ENCODE measurements at regions of chr2 and their contacts with region 1.

Region 1: GRCh38 chr2:112529757-112530156 is 12.5 kb upstream of the POLR1B start:
- DNase-seq: no peak
- H3K4me3 ChIP-seq: no peak overlapping the region
- H3K27ac ChIP-seq: no peak overlapping the region
- H3K4me1 ChIP-seq: no peaks in the 10 kb centered on the region
- H3K27me3 ChIP-seq: no peaks in the 10 kb centered on the region
- CTCF ChIP-seq: no peak

Region 2: DNA sequence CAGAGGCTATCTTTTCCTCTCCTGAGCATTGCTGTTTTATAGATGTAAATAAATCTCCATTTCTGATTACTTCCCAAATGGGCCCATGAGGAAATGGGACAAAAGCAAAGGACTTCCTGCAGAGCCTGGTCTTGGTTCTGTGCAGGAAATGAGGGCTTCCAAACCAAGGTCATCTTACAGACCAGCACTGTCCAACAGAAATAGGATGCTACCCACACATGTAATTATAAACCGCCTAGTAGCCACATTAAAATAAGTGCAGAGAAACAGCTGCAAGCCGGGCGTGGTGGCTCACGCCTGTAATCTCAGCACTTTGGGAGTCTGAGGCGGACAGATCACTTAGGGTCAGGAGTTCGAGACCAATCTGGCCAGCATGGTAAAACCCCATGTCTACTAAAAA is 41.6 kb before region 1 on chr2:
- CTCF ChIA-PET with region 1: no interaction called
- dilution Hi-C with region 1: loop called (anchors 5 kb)
- in situ Hi-C with region 1: no loop called
- intact Hi-C with region 1: no loop called
- DNase-seq: no peak
- H3K4me3 ChIP-seq: no peak overlapping the region
- H3K27ac ChIP-seq: no peak overlapping the region
- H3K4me1 ChIP-seq: peaks cover 5% of the 10 kb centered on the region
- H3K27me3 ChIP-seq: no peaks in the 10 kb centered on the region
- CTCF ChIP-seq: no peak

Region 3: GRCh38 chr2:112679484-112679883 is 149.7 kb after region 1 on chr2:
- CTCF ChIA-PET with region 1: no interaction called
- dilution Hi-C with region 1: no loop called
- in situ Hi-C with region 1: no loop called
- intact Hi-C with region 1: no loop called
- DNase-seq: peak; percentile 70
- H3K4me3 ChIP-seq: no peak overlapping the region
- H3K27ac ChIP-seq: peak overlapping the region; percentile 54
- H3K4me1 ChIP-seq: peaks cover 22% of the 10 kb centered on the region
- H3K27me3 ChIP-seq: no peaks in the 10 kb centered on the region
- CTCF ChIP-seq: no peak

Region 4: GRCh38 chr2:113050921-113051895 is 521.5 kb after region 1 on chr2:
- CTCF ChIA-PET with region 1: no interaction called
- dilution Hi-C with region 1: no loop called
- in situ Hi-C with region 1: no loop called
- intact Hi-C with region 1: no loop called
- DNase-seq: no peak
- H3K4me3 ChIP-seq: no peak overlapping the region
- H3K27ac ChIP-seq: no peak overlapping the region
- H3K4me1 ChIP-seq: no peaks in the 10 kb centered on the region
- H3K27me3 ChIP-seq: no peaks in the 10 kb centered on the region
- CTCF ChIP-seq: no peak